Heart left ventricle (tissue), 16 donors: ENCODE measurements at regions of chr18 and their contacts with region 1.

Region 1: GRCh38 chr18:74806700-74807416 is 209.2 kb downstream of the ZNF407 start:
- DNase-seq: no peak
- ATAC-seq: peak in 3 of 4 donors; percentile 49 to 73 (median 72)
- H3K4me3 ChIP-seq: no peak overlapping the region
- H3K27ac ChIP-seq: peak overlapping the region in 1 of 12 donors; percentile 2
- H3K4me1 ChIP-seq: peaks cover 0 to 5% (median 0%) of the 10 kb centered on the region in 12 donors
- H3K27me3 ChIP-seq: no peaks in the 10 kb centered on the region
- CTCF ChIP-seq: no peak
- POLR2A ChIP-seq: no peak

Region 2: GRCh38 chr18:74631623-74632283 is 175.1 kb before region 1 on chr18:
- intact Hi-C with region 1: no loop called
- DNase-seq: no peak
- ATAC-seq: no peak
- H3K4me3 ChIP-seq: no peak overlapping the region
- H3K27ac ChIP-seq: peak overlapping the region in 1 of 12 donors; percentile 69
- H3K4me1 ChIP-seq: peaks cover 0 to 22% (median 0%) of the 10 kb centered on the region in 12 donors
- H3K27me3 ChIP-seq: no peaks in the 10 kb centered on the region
- CTCF ChIP-seq: no peak
- POLR2A ChIP-seq: no peak

Region 3: DNA sequence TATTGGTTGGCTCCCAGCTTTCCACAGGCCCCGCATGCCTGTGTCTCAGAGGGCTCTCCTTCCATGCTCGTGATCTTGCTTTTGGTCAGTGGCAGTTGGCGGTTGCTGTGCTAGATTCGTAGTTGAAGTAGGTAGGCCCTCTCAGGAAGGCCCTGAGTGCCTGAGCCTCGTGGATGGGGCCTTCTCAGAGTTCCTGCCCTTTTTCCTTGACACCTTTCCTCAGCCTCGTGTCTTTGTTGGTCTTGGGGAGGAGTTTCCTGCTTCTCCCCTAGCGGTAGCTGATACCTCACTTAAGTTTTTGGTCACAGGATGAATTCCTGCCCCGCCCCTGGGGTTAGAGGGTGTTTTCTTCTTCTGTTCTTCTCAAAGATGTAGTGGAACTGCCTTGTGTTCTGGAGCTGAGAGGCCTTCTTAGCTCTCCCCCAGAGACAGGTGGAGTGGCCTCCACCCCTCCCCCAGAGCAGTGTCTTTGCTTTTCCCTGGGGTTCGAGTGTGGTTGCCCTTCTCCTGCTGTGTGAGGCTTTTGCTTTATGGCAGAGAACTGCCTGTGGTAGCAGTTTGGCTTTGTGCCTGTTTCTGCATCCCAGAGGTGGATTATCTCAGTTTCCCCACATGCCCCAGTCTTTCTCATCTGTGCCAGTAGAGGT is 114.4 kb before region 1 on chr18:
- intact Hi-C with region 1: loop called in 1 of 10 experiments (anchors 10 kb)
- DNase-seq: no peak
- ATAC-seq: no peak
- H3K4me3 ChIP-seq: no peak overlapping the region
- H3K27ac ChIP-seq: no peak overlapping the region
- H3K4me1 ChIP-seq: peaks cover 0 to 8% (median 0%) of the 10 kb centered on the region in 12 donors
- H3K27me3 ChIP-seq: no peaks in the 10 kb centered on the region
- CTCF ChIP-seq: no peak
- POLR2A ChIP-seq: no peak

Region 4: DNA sequence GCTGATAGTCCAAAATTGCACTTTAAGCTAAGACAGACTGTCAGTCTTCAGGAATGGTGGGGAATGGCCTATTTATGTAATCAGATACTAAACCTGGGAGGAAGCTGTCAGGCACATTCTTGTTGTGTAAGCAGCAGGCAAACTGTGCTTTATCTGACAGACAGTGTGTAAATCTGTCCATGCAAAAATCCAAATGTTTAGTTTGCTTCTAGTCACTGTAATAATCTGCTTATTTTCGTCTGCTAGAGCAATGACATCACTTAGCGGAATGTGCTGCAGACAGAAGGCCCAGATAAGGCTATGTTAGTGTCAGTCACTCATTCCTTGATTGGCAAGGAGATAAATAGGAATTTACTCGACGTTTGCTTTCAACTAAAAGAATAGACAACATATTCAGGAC is 54.3 kb after region 1 on chr18:
- intact Hi-C with region 1: loop called in 3 of 10 experiments (anchors 5 kb)
- DNase-seq: no peak
- ATAC-seq: peak in 3 of 4 donors; percentile 15 to 62 (median 44)
- H3K4me3 ChIP-seq: no peak overlapping the region
- H3K27ac ChIP-seq: peak overlapping the region in 10 of 12 donors; percentile 52 to 80 (median 64)
- H3K4me1 ChIP-seq: peaks cover 0 to 4% (median 0%) of the 10 kb centered on the region in 12 donors
- H3K27me3 ChIP-seq: no peaks in the 10 kb centered on the region
- CTCF ChIP-seq: no peak
- POLR2A ChIP-seq: no peak

Region 5: DNA sequence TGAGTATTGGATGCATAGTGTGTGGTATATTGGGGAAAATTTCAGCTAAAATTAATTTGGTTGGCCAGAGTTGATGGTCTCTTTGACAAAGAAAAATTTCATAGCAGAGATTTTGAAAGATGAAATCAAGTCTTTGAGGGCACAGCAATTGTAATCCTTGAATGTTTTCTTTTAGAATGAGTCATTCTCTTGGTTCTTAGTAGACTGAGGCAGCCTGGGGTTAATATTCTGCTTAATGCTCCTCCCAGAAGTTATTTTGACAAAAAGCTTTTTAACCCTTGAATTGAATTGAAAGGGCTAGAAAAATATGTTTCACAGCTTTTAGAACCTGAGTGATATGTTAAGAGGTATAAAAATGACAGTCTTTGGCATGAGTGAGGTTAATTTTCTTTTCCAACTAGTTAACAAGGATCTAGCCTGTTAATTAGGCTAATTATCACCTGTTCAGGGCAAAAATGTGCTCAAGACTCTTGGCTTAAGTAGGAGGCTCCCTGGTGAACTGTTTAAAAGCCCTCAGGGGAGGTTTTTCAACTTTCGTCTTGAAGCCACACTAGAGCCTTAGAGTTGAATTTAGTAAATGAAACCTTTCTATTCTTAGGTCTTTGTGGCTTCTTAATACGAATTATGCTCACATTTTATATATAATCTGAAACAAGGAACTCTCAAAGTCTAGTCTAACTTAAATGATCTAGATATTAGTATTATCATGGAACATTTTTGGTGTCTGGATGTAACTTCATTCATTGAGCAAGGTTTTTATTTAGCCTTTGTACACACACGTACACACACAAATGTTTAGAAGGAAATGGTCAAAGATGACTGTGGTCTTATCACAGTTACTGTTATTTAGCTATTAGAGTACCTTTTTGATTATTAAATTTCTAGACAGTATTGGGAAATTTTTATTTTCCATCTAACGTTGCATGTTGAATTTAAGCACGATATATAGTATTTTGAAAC is 63.3 kb after region 1 on chr18:
- intact Hi-C with region 1: loop called in 1 of 10 experiments (anchors 5 kb)
- DNase-seq: no peak
- ATAC-seq: no peak
- H3K4me3 ChIP-seq: no peak overlapping the region
- H3K27ac ChIP-seq: no peak overlapping the region
- H3K4me1 ChIP-seq: peaks cover 0 to 18% (median 0%) of the 10 kb centered on the region in 12 donors
- H3K27me3 ChIP-seq: no peaks in the 10 kb centered on the region
- CTCF ChIP-seq: no peak
- POLR2A ChIP-seq: no peak